GM10248 (cell line): ENCODE measurements at regions of chr6 and their contacts with region 1.

Region 1: DNA sequence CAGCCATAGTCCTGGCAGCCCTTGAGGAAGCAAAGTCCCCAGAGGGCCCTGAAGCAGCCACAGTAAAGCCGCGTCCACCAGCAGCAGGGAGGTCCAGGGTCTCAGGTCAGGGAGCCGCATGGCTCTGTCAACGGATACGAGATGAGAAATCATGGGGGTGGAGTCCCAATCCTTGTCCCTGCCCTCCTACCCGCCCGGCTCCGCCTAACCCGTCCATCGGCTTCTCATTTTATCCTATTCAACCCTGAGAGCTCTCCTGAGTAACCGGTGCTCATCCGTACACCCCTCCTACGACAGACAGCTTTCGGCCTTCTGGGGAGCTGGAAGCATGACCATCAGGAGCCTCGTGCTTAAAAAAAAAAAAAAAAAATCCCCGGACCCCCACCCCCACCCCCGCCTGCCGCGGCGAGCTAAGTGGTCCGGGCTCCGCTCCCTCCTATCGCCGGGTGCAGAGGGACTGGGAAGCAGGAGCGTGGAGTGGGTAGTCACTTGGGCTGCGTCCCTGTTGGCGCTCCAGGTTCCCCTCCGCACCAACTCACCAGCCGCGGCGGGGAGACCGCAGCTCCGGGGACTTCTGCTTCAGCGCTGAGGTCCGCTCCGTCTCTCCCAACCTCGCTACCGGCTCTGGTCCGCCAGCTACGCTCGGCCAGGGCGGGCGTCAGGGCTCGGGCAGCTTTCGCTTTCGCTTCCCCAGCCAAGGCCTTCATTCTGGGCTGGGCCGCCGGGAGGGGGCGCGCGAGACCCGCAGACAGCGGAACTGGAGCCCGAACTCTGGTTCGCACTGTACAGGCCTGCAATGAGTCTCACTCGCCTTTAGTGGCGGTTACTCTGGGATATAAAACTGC is at the start of gene TAP2:
- DNase-seq: peak; percentile 94
- CTCF ChIP-seq: peak; percentile 98

Region 2: DNA sequence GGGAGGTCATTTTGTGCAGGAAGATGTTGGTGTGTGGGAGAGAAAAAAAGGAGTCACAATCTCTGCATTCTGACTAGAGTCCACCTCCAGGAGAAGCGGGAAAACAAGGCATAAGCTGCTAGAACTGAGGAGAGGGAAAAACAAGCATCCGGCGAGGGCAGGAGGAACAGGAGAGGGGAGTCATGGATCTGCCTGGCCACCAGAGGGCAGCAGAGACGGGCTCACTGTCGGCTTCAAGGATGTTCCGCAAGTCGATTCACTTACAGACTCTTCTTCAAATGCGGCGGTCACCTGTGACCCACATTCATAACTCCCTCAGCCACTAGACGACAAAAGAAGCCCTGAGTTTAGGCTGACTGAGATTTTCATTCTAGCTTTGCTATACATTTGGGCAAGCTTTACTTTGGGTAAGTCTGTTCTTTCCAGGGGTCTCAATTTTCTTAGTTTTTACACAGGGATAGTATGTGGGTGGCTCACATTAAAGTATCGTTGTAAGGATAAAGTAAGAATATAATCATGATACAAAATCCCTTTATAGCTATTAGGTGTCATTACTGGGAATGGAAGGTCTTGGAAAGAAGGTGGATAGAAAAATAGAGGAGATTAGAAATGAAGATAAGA is 424.8 kb before region 1 on chr6:
- CTCF ChIA-PET with region 1: interaction called, 16 read pairs
- POLR2A ChIA-PET with region 1: no interaction called
- DNase-seq: peak; percentile 80
- CTCF ChIP-seq: peak; percentile 92

Region 3: GRCh38 chr6:32825966-32826365 is 12.4 kb before region 1 on chr6:
- CTCF ChIA-PET with region 1: interaction called, 50 read pairs
- POLR2A ChIA-PET with region 1: interaction called, 7 read pairs
- DNase-seq: no peak
- CTCF ChIP-seq: peak; percentile 36

Region 4: DNA sequence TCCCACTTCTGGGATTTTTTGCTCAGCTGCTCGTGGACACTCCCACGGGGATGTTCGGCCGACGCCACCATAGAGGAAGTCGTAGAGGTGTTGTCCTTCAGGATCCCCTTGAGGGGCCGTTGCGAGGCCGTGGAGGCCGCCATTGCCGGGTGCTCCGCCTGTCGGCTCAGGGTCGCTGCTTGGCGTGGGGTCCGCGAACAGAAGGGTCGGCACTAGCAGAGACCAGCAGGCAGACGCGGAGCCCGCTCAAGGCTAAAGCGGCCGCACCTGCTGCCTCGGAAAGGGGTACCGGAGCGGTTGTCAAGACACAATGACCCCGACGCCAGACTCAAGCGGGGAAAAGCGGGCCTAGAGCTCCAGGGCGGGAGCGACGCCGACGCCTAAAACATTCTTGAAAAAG is 41.4 kb after region 1 on chr6:
- CTCF ChIA-PET with region 1: interaction called, 25 read pairs
- POLR2A ChIA-PET with region 1: interaction called, 3 read pairs
- DNase-seq: no peak
- CTCF ChIP-seq: no peak

Region 5: GRCh38 chr6:32947552-32948465 is 109.5 kb after region 1 on chr6:
- CTCF ChIA-PET with region 1: interaction called, 26 read pairs
- POLR2A ChIA-PET with region 1: interaction called, 3 read pairs
- DNase-seq: no peak
- CTCF ChIP-seq: peak; percentile 82